MCF 10A (cell line): ENCODE measurements at regions of chr2 and their contacts with region 1.

Region 1: GRCh38 chr2:232327105-232328041 is 51.2 kb upstream of the ALPP start:
- DNase-seq: peak; percentile 59
- H3K4me3 Mint-ChIP-seq: no peak overlapping the region
- H3K27ac Mint-ChIP-seq: no peak overlapping the region
- H3K4me1 Mint-ChIP-seq: no peaks in the 10 kb centered on the region
- H3K27me3 Mint-ChIP-seq: no peaks in the 10 kb centered on the region
- CTCF ChIP-seq: peak; percentile 86

Region 2: GRCh38 chr2:231907787-231908186 is 419.6 kb before region 1 on chr2:
- CTCF ChIA-PET with region 1: interaction called, 14 read pairs
- POLR2A ChIA-PET with region 1: no interaction called
- intact Hi-C with region 1: loop called (anchors 1 kb)
- DNase-seq: no peak
- H3K4me3 Mint-ChIP-seq: no peak overlapping the region
- H3K27ac Mint-ChIP-seq: no peak overlapping the region
- H3K4me1 Mint-ChIP-seq: no peaks in the 10 kb centered on the region
- H3K27me3 Mint-ChIP-seq: no peaks in the 10 kb centered on the region
- CTCF ChIP-seq: no peak

Region 3: GRCh38 chr2:231925303-231926179 is 401.8 kb before region 1 on chr2:
- CTCF ChIA-PET with region 1: interaction called, 4 read pairs
- POLR2A ChIA-PET with region 1: no interaction called
- intact Hi-C with region 1: loop called (anchors 1 kb)
- DNase-seq: peak; percentile 85
- H3K4me3 Mint-ChIP-seq: peak overlapping the region; percentile 60
- H3K27ac Mint-ChIP-seq: no peak overlapping the region
- H3K4me1 Mint-ChIP-seq: no peaks in the 10 kb centered on the region
- H3K27me3 Mint-ChIP-seq: peaks cover 63% of the 10 kb centered on the region
- CTCF ChIP-seq: peak; percentile 91

Region 4: DNA sequence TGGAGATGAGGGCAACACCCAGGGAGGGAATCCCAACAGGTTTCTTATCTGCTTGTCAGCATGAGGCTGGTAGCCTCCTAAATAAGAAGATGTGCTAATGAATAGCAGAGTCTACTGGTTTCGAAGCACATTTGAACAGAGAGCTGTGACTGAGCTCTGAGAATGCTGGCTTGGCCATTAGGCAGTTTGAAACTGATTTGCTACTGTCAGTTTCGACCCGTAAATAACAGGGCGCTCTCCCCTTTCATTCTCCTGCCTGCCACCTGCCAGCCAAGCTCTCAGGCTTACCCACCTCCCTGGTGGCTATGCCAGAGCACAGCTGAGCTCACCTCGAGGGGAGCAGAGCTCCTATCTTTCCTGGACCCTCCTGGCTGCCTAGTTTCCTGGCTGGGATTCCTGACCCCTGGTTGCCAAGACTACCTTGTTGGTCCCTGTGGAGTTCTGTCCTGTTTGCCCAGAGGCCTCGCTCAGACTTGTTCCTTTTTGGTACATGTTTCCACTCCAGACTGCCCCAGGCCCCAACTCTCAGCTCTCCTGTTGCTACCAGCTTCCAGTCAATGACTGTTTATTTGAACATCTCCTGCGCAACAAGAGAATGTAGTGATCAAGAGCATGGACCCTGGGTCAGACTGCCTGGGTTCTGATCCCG is 51.2 kb before region 1 on chr2:
- CTCF ChIA-PET with region 1: no interaction called
- POLR2A ChIA-PET with region 1: no interaction called
- intact Hi-C with region 1: no loop called
- DNase-seq: no peak
- H3K4me3 Mint-ChIP-seq: no peak overlapping the region
- H3K27ac Mint-ChIP-seq: no peak overlapping the region
- H3K4me1 Mint-ChIP-seq: no peaks in the 10 kb centered on the region
- H3K27me3 Mint-ChIP-seq: no peaks in the 10 kb centered on the region
- CTCF ChIP-seq: no peak

Region 5: DNA sequence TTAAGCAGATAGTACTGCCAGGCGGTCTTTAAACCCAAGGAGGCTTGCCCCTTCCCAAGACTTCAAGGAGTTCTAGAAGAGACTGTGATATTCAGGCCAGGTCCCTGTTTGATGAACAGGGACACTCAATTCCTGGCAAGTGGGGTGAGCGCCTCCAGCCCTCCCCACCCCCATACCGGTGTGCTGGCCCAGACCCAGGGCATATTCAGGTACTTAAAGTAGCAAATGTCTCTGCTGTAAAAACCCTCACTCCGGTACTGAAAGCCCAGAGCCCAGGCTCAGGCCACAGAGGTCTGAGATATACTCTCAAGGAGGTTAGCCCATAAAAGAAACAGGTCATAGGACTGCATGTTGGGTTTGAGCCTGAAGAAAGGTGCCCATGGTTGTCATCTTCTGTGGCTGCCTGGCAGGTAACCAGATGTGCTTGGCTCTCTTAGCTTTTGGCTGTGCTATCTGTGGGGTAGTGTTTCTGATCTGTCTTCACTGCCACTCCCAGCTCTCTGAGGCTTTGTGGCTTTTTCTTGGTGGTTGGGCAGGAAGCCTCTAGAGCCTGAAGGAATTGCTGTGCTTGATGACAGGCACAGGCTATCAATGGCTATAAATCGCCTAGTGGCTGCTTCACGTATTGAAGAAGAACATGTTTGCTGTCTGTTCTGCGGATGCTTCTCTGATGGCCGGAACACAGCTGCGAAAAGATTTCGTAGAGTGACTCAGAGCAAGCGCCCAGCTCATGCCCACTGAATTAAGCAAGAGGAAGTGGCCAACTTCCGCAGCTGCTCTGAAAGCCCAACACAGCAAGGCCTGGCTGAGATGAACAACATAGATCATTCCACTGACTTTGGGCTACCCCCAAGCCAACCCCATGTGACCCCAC is 12.1 kb before region 1 on chr2:
- CTCF ChIA-PET with region 1: interaction called, 12 read pairs
- POLR2A ChIA-PET with region 1: no interaction called
- intact Hi-C with region 1: no loop called
- DNase-seq: peak; percentile 93
- H3K4me3 Mint-ChIP-seq: peak overlapping the region; percentile 25
- H3K27ac Mint-ChIP-seq: peak overlapping the region; percentile 94
- H3K4me1 Mint-ChIP-seq: peaks cover 20% of the 10 kb centered on the region
- H3K27me3 Mint-ChIP-seq: no peaks in the 10 kb centered on the region
- CTCF ChIP-seq: peak; percentile 29

Region 6: DNA sequence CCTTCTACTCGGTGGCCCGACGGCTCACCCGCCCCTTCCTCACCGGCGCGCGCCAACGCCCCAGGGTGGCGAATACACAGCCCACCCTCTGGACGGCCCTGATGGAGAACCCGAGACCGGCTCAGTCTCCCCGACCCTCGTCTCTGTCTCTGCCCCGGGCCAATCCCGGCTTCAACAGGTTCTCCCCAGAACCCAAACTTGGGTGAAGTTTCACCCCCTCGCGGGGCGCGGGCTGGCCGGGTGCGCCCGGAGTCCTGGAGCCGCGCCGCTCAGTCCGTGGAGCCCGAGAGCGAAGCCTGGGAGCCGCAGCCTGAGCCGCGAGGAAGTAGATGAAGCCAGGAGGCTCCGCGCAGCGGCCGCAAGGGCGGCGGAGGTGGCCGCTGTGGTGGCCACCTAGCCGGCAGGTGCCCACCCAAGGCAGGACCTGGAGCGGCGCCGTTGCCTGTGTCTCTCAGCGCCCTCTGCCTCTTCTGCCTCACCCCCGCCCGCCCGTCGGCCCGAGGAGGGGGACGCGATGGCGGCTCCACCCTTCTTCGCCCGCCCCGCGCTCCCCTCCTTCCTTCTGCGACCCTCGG is 24.6 kb after region 1 on chr2:
- CTCF ChIA-PET with region 1: no interaction called
- POLR2A ChIA-PET with region 1: no interaction called
- intact Hi-C with region 1: no loop called
- DNase-seq: no peak
- H3K4me3 Mint-ChIP-seq: no peak overlapping the region
- H3K27ac Mint-ChIP-seq: no peak overlapping the region
- H3K4me1 Mint-ChIP-seq: no peaks in the 10 kb centered on the region
- H3K27me3 Mint-ChIP-seq: peaks cover 10% of the 10 kb centered on the region
- CTCF ChIP-seq: no peak